Natural killer cell (primary cell): ENCODE measurements at regions of chr3 and their contacts with region 1.

Region 1: GRCh38 chr3:124761250-124761796 is 31.1 kb downstream of the UMPS start:
- DNase-seq: peak; percentile 74 to 88
- ATAC-seq: peak; percentile 80 to 96 (median 96)
- H3K4me3 ChIP-seq: no peak overlapping the region
- H3K4me3 Mint-ChIP-seq: peak overlapping the region; percentile 25
- H3K27ac ChIP-seq: no peak overlapping the region
- H3K27ac Mint-ChIP-seq: peak overlapping the region in 1 of 2 donors; percentile 57
- H3K4me1 ChIP-seq: peaks cover 7% of the 10 kb centered on the region
- H3K4me1 Mint-ChIP-seq: peaks cover 0 to 6% of the 10 kb centered on the region in 2 donors
- H3K27me3 ChIP-seq: no peaks in the 10 kb centered on the region
- H3K27me3 Mint-ChIP-seq: peaks cover 0 to 2% of the 10 kb centered on the region in 2 donors
- CTCF ChIP-seq: peak; percentile 83

Region 2: GRCh38 chr3:124905849-124906248 is 144.5 kb after region 1 on chr3:
- intact Hi-C with region 1: loop called (anchors 1 kb)
- DNase-seq: no peak
- ATAC-seq: no peak
- H3K4me3 ChIP-seq: no peak overlapping the region
- H3K4me3 Mint-ChIP-seq: no peak overlapping the region
- H3K27ac ChIP-seq: no peak overlapping the region
- H3K27ac Mint-ChIP-seq: no peak overlapping the region
- H3K4me1 ChIP-seq: peaks cover 7% of the 10 kb centered on the region
- H3K4me1 Mint-ChIP-seq: peaks cover 0 to 7% of the 10 kb centered on the region in 2 donors
- H3K27me3 ChIP-seq: no peaks in the 10 kb centered on the region
- H3K27me3 Mint-ChIP-seq: peaks cover 12 to 20% of the 10 kb centered on the region in 2 donors
- CTCF ChIP-seq: no peak

Region 3: DNA sequence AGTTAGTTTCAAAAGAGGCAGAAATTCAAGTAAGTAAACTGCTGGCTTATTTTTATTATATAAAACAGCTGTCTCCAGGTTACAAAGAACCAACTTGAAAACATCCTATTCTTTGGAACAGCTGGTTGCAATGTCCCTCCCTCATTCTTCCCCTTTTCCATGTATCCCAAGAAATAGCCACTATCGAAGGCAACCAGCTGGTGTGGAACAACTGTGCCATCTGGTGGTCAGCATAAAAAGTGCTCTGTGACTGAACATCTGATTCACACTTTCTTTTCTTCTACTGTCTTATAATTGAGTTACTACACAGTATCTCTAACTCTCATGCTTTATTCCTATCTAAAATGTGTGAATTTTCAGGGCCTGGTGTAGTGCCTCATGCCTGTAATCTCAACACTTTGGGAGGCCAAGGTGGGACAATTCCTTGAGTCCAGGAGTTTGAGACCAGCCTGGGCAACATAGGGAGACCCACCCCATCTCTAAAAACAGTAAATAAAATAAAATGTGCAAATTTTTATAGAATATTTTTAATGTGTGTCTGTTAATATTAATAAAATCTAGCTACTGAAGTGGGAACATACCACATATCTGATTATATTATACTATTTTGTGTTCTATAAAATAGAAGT is 824.4 kb after region 1 on chr3:
- intact Hi-C with region 1: loop called (anchors 2 kb)
- DNase-seq: peak in 1 of 2 donors; percentile 74
- ATAC-seq: peak; percentile 67 to 70 (median 68)
- H3K4me3 ChIP-seq: no peak overlapping the region
- H3K4me3 Mint-ChIP-seq: peak overlapping the region; percentile 13
- H3K27ac ChIP-seq: no peak overlapping the region
- H3K27ac Mint-ChIP-seq: no peak overlapping the region
- H3K4me1 ChIP-seq: peaks cover 8% of the 10 kb centered on the region
- H3K4me1 Mint-ChIP-seq: peaks cover 14 to 19% of the 10 kb centered on the region in 2 donors
- H3K27me3 ChIP-seq: no peaks in the 10 kb centered on the region
- H3K27me3 Mint-ChIP-seq: no peaks in the 10 kb centered on the region
- CTCF ChIP-seq: peak; percentile 82